ENCODE measurements at regions of chr2 and their contacts with region 1.

Region 1: DNA sequence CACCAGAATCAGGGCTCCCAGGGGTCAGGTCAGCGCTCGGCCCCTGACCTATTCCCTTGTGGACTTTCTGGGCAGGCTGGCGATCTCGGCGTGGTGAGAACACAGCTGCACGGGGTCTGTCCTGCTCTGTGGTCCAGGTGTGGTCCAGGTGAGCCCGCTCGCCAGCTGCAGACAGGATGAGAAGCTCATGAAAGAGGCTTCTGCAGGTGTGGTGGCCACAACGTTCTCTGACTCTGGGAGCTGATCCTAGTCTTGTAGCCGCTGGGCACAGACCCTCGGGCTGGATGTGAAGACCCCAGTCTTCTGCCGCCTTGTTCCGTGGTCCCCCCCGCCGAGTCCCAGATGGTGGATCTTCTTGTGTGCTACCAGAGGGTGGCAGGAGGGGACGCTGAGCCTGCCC is 129.7 kb downstream of the RTP5 start:
- DNase-seq: no peak
- H3K4me3 Mint-ChIP-seq: no peak overlapping the region
- H3K27ac Mint-ChIP-seq: no peak overlapping the region
- H3K4me1 Mint-ChIP-seq: peaks cover 10% of the 10 kb centered on the region
- H3K27me3 Mint-ChIP-seq: no peaks in the 10 kb centered on the region

Region 2: GRCh38 chr2:241482176-241482955 is 516.8 kb before region 1 on chr2:
- CTCF ChIA-PET with region 1: no interaction called
- POLR2A ChIA-PET with region 1: no interaction called
- intact Hi-C with region 1: no loop called
- DNase-seq: no peak
- H3K4me3 Mint-ChIP-seq: no peak overlapping the region
- H3K27ac Mint-ChIP-seq: no peak overlapping the region
- H3K4me1 Mint-ChIP-seq: no peaks in the 10 kb centered on the region
- H3K27me3 Mint-ChIP-seq: no peaks in the 10 kb centered on the region

Region 3: DNA sequence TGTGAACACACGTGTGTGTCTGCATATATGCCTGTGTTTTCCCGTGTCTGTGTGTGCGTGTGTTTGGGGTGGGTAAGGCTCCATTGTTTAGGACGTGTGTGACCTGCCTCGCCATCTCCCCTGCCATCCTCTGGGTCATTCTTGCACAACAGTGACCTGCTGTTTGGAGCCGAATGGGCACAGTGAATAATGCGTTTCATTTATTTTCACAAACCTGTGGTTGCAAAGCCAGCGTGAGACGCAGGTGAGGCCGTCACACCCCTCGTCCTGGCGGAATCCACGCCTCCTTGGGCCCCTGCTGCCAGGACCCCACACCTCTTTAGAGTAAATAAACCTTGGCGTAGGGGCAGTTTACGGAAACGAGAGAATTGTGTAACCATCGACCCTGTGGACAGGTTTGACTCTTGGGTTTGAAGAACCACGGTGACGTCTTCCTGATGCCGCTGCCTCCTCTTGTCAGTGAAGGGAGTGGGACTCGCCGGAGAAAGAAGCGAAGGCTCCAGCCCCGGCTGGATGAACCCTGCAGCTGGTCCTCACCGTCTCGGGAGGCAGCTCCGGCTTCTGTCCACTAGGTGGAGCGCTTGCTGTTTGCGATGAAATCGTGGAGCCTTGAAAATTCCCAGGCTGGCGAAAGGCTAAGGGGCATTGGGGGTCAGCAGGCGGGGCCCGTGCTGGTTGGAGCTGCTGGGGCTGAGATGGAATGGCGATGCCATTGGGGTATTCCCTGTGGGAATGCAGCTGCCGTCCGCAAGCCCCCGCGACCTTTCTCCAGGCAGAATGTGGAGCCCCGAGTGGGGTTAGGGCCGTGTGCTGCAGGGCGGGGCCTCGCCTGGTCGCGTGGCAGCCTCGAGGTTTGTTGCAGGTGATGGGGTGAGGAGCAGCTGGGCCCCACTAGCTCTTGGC is 48.5 kb before region 1 on chr2:
- CTCF ChIA-PET with region 1: interaction called, 10 read pairs
- POLR2A ChIA-PET with region 1: no interaction called
- intact Hi-C with region 1: no loop called
- DNase-seq: peak; percentile 68
- H3K4me3 Mint-ChIP-seq: no peak overlapping the region
- H3K27ac Mint-ChIP-seq: no peak overlapping the region
- H3K4me1 Mint-ChIP-seq: peaks cover 2% of the 10 kb centered on the region
- H3K27me3 Mint-ChIP-seq: no peaks in the 10 kb centered on the region